Caco-2 (cell line): ENCODE measurements at regions of chr18 and their contacts with region 1.

Region 1: GRCh38 chr18:3604498-3605408 is 154.8 kb downstream of the TGIF1 start:
- DNase-seq: peak in 1 of 2 experiments; percentile 53
- H3K4me3 ChIP-seq: peak overlapping the region; percentile 50
- H3K4me3 Mint-ChIP-seq: no peak overlapping the region
- H3K27ac Mint-ChIP-seq: no peak overlapping the region
- H3K4me1 ChIP-seq: peaks cover 35% of the 10 kb centered on the region
- H3K4me1 Mint-ChIP-seq: peaks cover 15% of the 10 kb centered on the region
- H3K27me3 ChIP-seq: no peaks in the 10 kb centered on the region
- H3K27me3 Mint-ChIP-seq: no peaks in the 10 kb centered on the region
- CTCF ChIP-seq: no peak

Region 2: DNA sequence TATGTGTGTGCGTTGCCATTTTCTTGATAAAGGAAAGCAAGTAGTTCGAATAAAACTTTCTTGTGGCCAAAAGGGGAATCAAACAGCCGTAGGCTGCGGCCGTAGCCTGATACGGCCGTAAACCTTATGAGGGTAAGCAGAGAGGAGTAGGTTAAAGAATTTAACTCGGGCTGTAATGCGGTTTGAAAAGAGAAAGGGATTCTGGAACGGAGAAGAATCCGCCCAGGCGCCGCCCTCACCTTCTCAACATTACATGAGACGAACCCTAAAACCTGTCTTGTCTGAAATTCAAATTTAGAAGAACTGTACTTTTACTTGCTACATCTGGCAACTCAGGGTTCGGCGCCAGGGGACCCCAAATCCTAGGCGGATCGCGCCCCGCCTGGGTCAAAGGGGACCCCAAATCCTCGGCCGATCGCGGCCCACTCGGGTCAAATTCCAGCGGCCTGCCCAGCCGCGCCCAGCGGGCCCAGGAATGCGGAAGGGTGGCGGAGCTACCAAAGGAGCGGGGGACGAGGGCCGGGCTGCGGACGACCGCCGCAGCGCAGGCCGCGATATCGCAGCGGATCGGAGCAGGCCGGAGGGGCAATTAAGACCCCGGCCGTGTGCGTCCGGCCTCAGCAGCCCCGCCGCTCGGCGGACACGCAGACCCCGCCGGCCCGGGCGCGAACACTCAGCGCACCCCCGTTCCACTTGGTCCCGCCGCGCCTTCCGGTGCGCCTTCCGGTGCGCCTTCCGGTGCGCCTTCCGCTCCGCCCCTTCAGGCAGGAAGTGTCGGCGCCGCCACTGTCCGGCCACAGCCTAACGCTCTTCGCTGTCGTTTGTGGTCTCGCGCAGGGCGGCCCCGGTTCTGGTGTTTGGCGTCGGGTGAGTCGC is 343.1 kb before region 1 on chr18 and contains the start of gene MYL12B:
- CTCF ChIA-PET with region 1: no interaction called
- POLR2A ChIA-PET with region 1: no interaction called
- intact Hi-C with region 1: loop called (anchors 1 kb)
- DNase-seq: peak; percentile 83 to 89
- H3K4me3 ChIP-seq: peak within 1 kb of the TSS; percentile 97
- H3K4me3 Mint-ChIP-seq: peak within 1 kb of the TSS; percentile 84
- H3K27ac Mint-ChIP-seq: peak within 1 kb of the TSS; percentile 99
- H3K4me1 ChIP-seq: peaks cover 54% of the 10 kb centered on the region
- H3K4me1 Mint-ChIP-seq: peaks cover 38% of the 10 kb centered on the region
- H3K27me3 ChIP-seq: no peaks in the 10 kb centered on the region
- H3K27me3 Mint-ChIP-seq: no peaks in the 10 kb centered on the region
- CTCF ChIP-seq: no peak
- total RNA-seq, gene MYL12B: 457 and 467 TPM in 2 replicates

Region 3: GRCh38 chr18:3454365-3455089 is 150.2 kb before region 1 on chr18:
- CTCF ChIA-PET with region 1: interaction called, 4 read pairs
- POLR2A ChIA-PET with region 1: interaction called, 30 read pairs
- intact Hi-C with region 1: loop called (anchors 1 kb)
- DNase-seq: peak; percentile 52 to 69
- H3K4me3 ChIP-seq: peak overlapping the region; percentile 15; the same call in 1 of the 2 replicates
- H3K4me3 Mint-ChIP-seq: peak overlapping the region; percentile 87
- H3K27ac Mint-ChIP-seq: peak overlapping the region; percentile 97
- H3K4me1 ChIP-seq: peaks cover 44% of the 10 kb centered on the region
- H3K4me1 Mint-ChIP-seq: peaks cover 39% of the 10 kb centered on the region
- H3K27me3 ChIP-seq: no peaks in the 10 kb centered on the region
- H3K27me3 Mint-ChIP-seq: no peaks in the 10 kb centered on the region
- CTCF ChIP-seq: peak; percentile 57 to 69

Region 4: DNA sequence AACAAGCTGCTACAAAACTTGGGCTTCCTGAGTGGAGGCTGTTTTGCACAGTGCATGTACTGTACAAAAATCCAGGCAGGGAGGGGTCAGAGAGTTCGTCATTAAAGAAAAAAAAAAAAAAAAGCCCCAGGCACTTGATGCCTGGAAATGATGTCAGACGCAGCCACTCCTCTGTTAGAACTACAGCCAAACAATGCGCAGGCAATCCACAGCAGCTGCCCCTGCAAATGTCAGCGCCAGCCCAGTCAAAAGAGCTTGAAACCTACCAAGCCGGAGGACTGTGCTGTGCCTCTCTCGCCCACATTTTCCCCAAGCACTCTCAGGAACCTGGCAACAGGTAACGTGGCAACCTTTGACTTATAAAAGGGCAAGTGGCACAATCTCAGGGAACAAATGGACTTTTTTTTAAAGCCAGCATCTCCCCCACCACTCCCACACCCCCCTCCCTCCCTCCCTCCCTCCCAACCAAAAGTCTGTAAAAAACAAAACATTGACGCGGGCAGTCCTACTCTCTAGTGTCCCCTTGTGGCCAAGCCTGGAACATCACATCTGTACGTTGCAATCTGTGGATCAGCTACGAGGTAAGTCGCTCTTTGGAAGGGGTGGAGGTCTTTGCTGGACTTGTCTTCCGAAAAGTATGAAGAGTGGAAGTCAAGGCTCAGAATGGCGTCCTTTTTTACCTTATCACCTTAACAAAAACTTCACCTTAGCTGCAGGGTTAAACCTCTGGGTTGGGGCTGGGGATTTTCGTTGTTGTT is 10.7 kb before region 1 on chr18:
- CTCF ChIA-PET with region 1: interaction called, 18 read pairs
- POLR2A ChIA-PET with region 1: interaction called, 26 read pairs
- intact Hi-C with region 1: loop called (anchors 1 kb)
- DNase-seq: peak; percentile 89 to 90
- H3K4me3 ChIP-seq: peak overlapping the region; percentile 39
- H3K4me3 Mint-ChIP-seq: peak overlapping the region; percentile 85
- H3K27ac Mint-ChIP-seq: peak overlapping the region; percentile 87
- H3K4me1 ChIP-seq: peaks cover 47% of the 10 kb centered on the region
- H3K4me1 Mint-ChIP-seq: peaks cover 47% of the 10 kb centered on the region
- H3K27me3 ChIP-seq: no peaks in the 10 kb centered on the region
- H3K27me3 Mint-ChIP-seq: no peaks in the 10 kb centered on the region
- CTCF ChIP-seq: peak; percentile 85 to 93

Region 5: DNA sequence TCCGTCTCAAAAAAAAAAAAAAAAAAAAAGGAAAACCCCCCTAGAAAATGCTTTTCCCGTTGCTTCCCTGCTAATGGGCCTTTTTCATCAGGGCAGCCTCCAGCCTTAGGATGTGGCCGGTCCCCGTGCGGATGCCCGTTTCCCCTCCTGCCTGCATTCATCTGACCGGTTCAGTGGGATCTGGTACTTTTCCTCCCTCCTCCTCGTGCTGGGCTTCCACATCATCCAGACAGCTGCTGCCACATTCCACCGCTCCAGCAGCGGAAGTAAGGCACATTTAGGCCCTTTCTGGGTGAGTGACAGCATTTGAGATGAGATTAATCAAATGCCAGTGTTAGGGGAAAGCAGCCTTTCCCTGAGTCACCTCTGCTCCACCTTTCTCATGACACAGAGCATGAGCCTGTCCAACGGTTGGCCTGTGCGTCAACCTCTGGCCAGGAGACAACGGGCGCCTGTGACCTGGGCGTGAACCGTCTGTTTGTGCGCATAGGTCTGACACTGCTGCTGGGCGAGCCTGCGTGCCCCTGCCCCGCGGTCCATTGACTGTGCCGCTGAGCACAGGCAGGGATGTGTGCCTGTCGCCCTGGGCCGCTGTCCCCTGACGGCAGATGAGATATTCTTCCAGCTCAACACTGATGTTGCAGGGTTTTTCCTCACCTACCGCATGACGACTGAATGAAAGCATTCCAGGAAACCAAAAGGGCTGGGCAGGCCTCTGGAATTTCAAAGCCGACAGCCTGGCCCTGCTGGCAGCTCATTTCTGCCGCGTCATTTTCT is 19.2 kb after region 1 on chr18:
- CTCF ChIA-PET with region 1: interaction called, 6 read pairs
- POLR2A ChIA-PET with region 1: interaction called, 66 read pairs
- intact Hi-C with region 1: loop called (anchors 1 kb)
- DNase-seq: peak; percentile 90 to 93
- H3K4me3 ChIP-seq: peak overlapping the region; percentile 17
- H3K4me3 Mint-ChIP-seq: peak overlapping the region; percentile 97
- H3K27ac Mint-ChIP-seq: peak overlapping the region; percentile 99
- H3K4me1 ChIP-seq: peaks cover 62% of the 10 kb centered on the region
- H3K4me1 Mint-ChIP-seq: peaks cover 50% of the 10 kb centered on the region
- H3K27me3 ChIP-seq: no peaks in the 10 kb centered on the region
- H3K27me3 Mint-ChIP-seq: peaks cover 2% of the 10 kb centered on the region
- CTCF ChIP-seq: no peak

Region 6: DNA sequence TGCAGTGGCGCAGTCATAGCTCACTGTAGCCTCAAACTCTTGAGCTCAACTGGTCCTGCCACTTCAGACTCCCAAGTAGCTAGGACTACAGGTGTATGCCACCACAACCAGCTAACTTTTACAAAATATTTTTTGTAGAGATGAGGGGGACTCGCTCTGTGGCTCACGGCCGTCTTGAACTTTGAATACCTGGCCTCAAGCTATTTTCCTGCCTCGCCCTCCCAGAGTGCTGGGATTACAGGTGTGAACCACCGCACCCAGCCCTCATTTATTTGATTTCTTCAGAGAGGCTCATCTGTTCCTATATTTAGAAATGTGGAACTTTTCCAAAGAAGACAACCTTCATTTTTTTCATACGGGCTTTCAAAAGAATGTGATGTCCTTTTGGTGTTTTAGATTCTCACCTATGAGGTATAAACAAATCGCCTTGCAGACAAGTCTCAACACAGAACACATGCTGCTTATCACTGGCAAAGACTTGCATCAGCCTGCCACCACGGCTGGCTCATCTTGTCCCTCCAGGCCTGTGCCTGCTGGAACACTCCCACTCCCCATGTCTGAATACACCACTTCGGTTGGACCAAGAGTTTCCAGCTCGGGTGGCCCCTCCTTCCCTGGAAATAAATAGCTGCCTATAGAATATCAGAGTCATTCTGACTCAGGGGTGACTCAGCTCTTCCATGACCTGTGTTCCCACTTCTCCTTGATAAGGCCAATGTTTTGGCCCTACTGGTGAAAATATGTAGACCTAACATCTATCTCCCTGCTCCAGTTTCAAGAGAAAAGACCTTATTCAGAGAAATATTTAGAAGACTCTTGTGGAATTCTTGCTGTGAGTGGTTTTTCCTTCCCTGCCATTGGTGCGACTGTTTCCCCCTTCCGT is 47.9 kb after region 1 on chr18:
- CTCF ChIA-PET with region 1: interaction called, 4 read pairs
- POLR2A ChIA-PET with region 1: interaction called, 16 read pairs
- intact Hi-C with region 1: loop called (anchors 1 kb)
- DNase-seq: peak; percentile 93 to 96
- H3K4me3 ChIP-seq: no peak overlapping the region
- H3K4me3 Mint-ChIP-seq: peak overlapping the region; percentile 67
- H3K27ac Mint-ChIP-seq: peak overlapping the region; percentile 90
- H3K4me1 ChIP-seq: peaks cover 82% of the 10 kb centered on the region
- H3K4me1 Mint-ChIP-seq: peaks cover 52% of the 10 kb centered on the region
- H3K27me3 ChIP-seq: no peaks in the 10 kb centered on the region
- H3K27me3 Mint-ChIP-seq: no peaks in the 10 kb centered on the region
- CTCF ChIP-seq: peak in 1 of 2 experiments; percentile 19

Region 7: GRCh38 chr18:3966985-3967856 is 362.5 kb after region 1 on chr18:
- CTCF ChIA-PET with region 1: no interaction called
- POLR2A ChIA-PET with region 1: interaction called, 10 read pairs
- intact Hi-C with region 1: no loop called
- DNase-seq: no peak
- H3K4me3 ChIP-seq: no peak overlapping the region
- H3K4me3 Mint-ChIP-seq: no peak overlapping the region
- H3K27ac Mint-ChIP-seq: no peak overlapping the region
- H3K4me1 ChIP-seq: no peaks in the 10 kb centered on the region
- H3K4me1 Mint-ChIP-seq: peaks cover 7% of the 10 kb centered on the region
- H3K27me3 ChIP-seq: no peaks in the 10 kb centered on the region
- H3K27me3 Mint-ChIP-seq: no peaks in the 10 kb centered on the region
- CTCF ChIP-seq: no peak